Right cardiac atrium (tissue), 5 donors: ENCODE measurements at regions of chr10 and their contacts with region 1.

Region 1: DNA sequence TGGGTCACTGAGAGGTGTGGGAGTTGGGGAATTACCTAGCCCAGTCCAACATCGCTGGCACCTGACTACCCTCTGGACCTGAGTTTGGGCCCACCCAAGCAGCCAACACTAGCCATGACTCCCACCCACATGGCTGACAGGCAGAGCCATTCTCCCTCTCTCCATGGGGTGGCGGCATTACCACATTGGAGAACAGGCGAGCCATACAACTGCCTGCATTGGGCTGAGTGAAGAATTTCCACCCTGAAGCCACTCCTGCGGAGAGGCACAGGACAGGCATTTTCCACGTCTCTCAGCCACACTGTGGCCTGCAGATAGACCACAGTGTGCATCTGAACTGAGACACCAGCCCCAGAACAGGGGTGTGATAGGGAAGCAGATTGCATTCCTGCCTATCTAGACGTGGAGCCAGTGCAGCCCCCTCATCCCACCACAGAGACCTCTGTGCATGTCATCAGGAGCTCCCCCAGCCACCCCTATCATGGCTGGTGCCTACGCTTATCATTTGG is 58.2 kb upstream of the ANTXRL start:
- DNase-seq: peak; percentile 67 to 83 (median 82)
- ATAC-seq: peak; percentile 94 to 95
- H3K4me3 ChIP-seq: no peak overlapping the region
- H3K27ac ChIP-seq: no peak overlapping the region
- H3K4me1 ChIP-seq: no peaks in the 10 kb centered on the region
- H3K27me3 ChIP-seq: no peaks in the 10 kb centered on the region

Region 2: DNA sequence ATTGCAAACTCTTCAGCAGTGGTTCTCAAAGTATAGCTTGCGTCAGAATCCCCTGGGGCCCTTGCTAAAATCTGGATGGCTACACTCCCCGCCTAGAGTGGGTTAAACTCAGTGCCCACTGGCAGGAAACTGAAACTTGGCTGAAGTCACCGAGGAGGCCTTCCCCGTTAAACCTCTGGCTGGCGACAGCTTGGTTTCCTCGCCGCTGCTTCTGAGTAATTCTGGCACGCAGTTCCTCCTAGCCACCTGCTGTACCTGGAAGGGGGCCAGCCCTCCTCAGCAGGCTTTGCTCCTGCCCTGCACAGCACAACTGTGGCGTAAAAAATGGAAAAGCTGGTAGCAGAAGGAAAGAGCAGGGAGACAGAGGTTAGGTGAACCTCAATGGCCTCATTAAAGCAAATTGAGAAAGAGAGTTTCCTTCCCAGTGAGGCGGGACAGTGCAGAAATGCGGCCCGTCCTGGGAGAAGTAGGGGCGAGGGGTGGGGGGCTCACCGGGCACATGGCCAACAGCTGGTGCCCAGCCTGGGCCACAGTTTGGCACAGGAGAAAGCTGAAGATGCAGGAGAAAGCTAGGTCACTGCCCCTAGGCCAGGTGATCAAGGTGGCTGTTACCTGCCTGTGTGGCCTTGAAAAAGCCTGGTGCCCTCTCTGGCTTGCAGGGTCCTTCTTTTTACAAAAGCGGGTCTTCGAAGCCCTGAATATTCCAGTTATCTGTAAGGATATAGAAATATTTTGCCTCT is 808.0 kb before region 1 on chr10:
- intact Hi-C with region 1: no loop called
- DNase-seq: peak; percentile 84 to 91 (median 90)
- ATAC-seq: peak; percentile 18 to 22
- H3K4me3 ChIP-seq: no peak overlapping the region
- H3K27ac ChIP-seq: peak overlapping the region; percentile 4
- H3K4me1 ChIP-seq: peaks cover 8% of the 10 kb centered on the region
- H3K27me3 ChIP-seq: no peaks in the 10 kb centered on the region

Region 3: GRCh38 chr10:46325023-46325422 is 96.4 kb after region 1 on chr10:
- intact Hi-C with region 1: loop called in 2 of 4 experiments (anchors 5 to 10 kb)
- DNase-seq: no peak
- ATAC-seq: peak; percentile 47 to 51
- H3K4me3 ChIP-seq: no peak overlapping the region
- H3K27ac ChIP-seq: no peak overlapping the region
- H3K4me1 ChIP-seq: no peaks in the 10 kb centered on the region
- H3K27me3 ChIP-seq: no peaks in the 10 kb centered on the region